BJ (cell line): ENCODE measurements at regions of chr9 and their contacts with region 1.

Region 1: GRCh38 chr9:98974994-98975712 is 31.4 kb downstream of the COL15A1 start:
- DNase-seq: no peak
- H3K4me3 ChIP-seq: no peak overlapping the region
- H3K27me3 ChIP-seq: peaks cover 7% of the 10 kb centered on the region
- CTCF ChIP-seq: peak; percentile 100

Region 2: GRCh38 chr9:98807070-98807810 is 167.9 kb before region 1 on chr9 and contains the start of gene GALNT12:
- CTCF ChIA-PET with region 1: no interaction called
- POLR2A ChIA-PET with region 1: no interaction called
- DNase-seq: no peak
- H3K4me3 ChIP-seq: peak within 1 kb of the TSS; percentile 50
- H3K27me3 ChIP-seq: peaks cover 16% of the 10 kb centered on the region
- CTCF ChIP-seq: no peak
- polyA plus RNA-seq, gene GALNT12: 4.2 and 4.8 TPM in 2 replicates

Region 3: DNA sequence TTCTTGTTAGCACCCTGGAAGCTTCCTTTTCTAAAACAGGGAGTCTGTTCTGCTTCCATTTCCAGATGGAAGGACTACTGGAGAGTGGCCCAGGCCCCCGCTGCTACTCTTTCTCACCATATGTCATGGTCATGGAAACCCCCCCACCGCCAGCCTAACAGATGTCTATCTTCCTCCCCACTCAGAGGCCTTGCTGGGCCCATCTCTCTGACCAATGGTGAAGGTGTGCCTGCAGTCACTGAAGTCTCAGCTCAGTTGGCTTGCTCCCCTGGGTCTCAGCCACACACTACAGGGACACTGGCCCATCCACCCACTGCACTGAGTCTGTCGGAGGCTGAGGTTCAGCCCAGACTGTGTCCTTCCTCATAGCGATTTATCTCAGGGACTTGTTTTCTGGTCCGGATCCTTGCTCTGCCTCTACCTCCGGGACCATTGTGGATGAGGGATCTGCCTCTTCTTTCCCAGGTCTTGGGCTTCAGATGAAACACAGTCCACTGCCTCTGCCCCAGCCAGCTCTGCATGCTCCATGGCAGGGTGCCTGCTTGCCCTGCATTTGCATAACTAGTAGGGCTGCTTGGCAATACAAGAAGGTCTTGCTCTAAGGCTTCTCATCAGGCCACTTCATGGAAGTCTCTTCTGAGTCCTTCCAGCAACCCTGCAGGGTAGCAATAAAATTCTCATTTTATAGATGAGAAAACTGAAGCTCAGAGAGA is 136.8 kb before region 1 on chr9:
- CTCF ChIA-PET with region 1: no interaction called
- POLR2A ChIA-PET with region 1: no interaction called
- DNase-seq: no peak
- H3K4me3 ChIP-seq: no peak overlapping the region
- H3K27me3 ChIP-seq: no peaks in the 10 kb centered on the region; the same call in 1 of the 2 replicates
- CTCF ChIP-seq: no peak

Region 4: GRCh38 chr9:98958271-98958984 is 16.7 kb before region 1 on chr9:
- CTCF ChIA-PET with region 1: interaction called, 17 read pairs
- POLR2A ChIA-PET with region 1: interaction called, 3 read pairs
- DNase-seq: peak; percentile 99
- H3K4me3 ChIP-seq: no peak overlapping the region
- H3K27me3 ChIP-seq: no peaks in the 10 kb centered on the region
- CTCF ChIP-seq: 0 out of 2 replicates have a peak, but pooled peaks have one; percentile 4

Region 5: GRCh38 chr9:98989036-98990000 is 14.2 kb after region 1 on chr9:
- CTCF ChIA-PET with region 1: interaction called, 13 read pairs
- POLR2A ChIA-PET with region 1: no interaction called
- DNase-seq: peak; percentile 99
- H3K4me3 ChIP-seq: no peak overlapping the region
- H3K27me3 ChIP-seq: no peaks in the 10 kb centered on the region; the same call in none of the 2 replicates
- CTCF ChIP-seq: peak; percentile 30; the same call in 1 of the 2 replicates